ENCODE measurements at regions of chr4 and their contacts with region 1.

Region 1: GRCh38 chr4:113901994-113902787 is 77.3 kb downstream of the ARSJ start:
- DNase-seq: peak; percentile 81 to 87 (median 85)
- H3K4me3 ChIP-seq: peak overlapping the region; percentile 19 to 33
- H3K4me3 Mint-ChIP-seq: peak overlapping the region; percentile 67 to 89 (median 78)
- H3K27ac ChIP-seq: peak overlapping the region; percentile 45
- H3K27ac Mint-ChIP-seq: peak overlapping the region; percentile 69 to 98 (median 89)
- H3K4me1 ChIP-seq: peaks cover 94% of the 10 kb centered on the region
- H3K4me1 Mint-ChIP-seq: peaks cover 49 to 77% (median 66%) of the 10 kb centered on the region in 4 donors
- H3K27me3 ChIP-seq: no peaks in the 10 kb centered on the region
- H3K27me3 Mint-ChIP-seq: no peaks in the 10 kb centered on the region

Region 2: GRCh38 chr4:113825272-113825671 is 76.9 kb before region 1 on chr4:
- CTCF ChIA-PET with region 1: no interaction called
- POLR2A ChIA-PET with region 1: interaction called, 3 read pairs
- intact Hi-C with region 1: loop called (anchors 5 kb)
- DNase-seq: peak in 4 of 5 donors; percentile 32 to 36 (median 34)
- H3K4me3 ChIP-seq: no peak overlapping the region
- H3K4me3 Mint-ChIP-seq: peak overlapping the region in 6 of 8 donors; percentile 0 to 74 (median 55)
- H3K27ac ChIP-seq: no peak overlapping the region
- H3K27ac Mint-ChIP-seq: peak overlapping the region in 4 of 7 donors; percentile 1 to 28 (median 20)
- H3K4me1 ChIP-seq: peaks cover 26% of the 10 kb centered on the region
- H3K4me1 Mint-ChIP-seq: peaks cover 28 to 43% (median 36%) of the 10 kb centered on the region in 4 donors
- H3K27me3 ChIP-seq: no peaks in the 10 kb centered on the region
- H3K27me3 Mint-ChIP-seq: no peaks in the 10 kb centered on the region

Region 3: DNA sequence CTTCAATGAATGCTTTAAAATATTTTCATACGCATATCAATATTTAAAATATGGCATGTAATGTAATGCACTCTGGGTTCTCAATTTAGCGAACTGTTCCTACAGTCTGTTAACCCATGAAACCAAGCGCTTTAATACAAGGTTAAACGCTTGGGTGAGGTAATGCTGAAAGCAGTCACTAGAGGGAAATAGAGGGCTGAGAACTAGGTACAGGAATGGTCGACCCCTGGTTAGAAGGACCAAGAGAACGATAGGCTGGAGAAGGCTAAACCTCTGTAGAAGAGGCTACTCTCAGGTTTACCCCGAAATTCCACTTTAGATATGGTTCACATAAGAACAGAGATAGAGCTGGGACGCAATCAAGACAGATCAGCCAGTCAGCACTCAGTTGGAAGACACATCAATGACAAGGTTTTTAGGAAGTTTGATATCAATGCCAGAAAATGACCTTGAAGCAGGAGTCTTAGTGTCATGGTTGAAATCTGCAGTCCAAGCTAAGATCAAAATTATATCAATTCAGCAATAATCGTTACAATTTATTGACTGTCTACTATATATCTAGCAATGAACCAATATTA is 50.4 kb after region 1 on chr4:
- CTCF ChIA-PET with region 1: interaction called, 3 read pairs
- POLR2A ChIA-PET with region 1: no interaction called
- intact Hi-C with region 1: loop called (anchors 5 kb)
- DNase-seq: peak in 4 of 5 donors; percentile 5 to 30 (median 15)
- H3K4me3 ChIP-seq: no peak overlapping the region
- H3K4me3 Mint-ChIP-seq: peak overlapping the region in 1 of 8 donors; percentile 10
- H3K27ac ChIP-seq: no peak overlapping the region
- H3K27ac Mint-ChIP-seq: no peak overlapping the region
- H3K4me1 ChIP-seq: peaks cover 5% of the 10 kb centered on the region
- H3K4me1 Mint-ChIP-seq: peaks cover 0 to 6% (median 5%) of the 10 kb centered on the region in 4 donors
- H3K27me3 ChIP-seq: no peaks in the 10 kb centered on the region
- H3K27me3 Mint-ChIP-seq: peaks cover 2 to 7% of the 10 kb centered on the region in 2 donors

Region 4: GRCh38 chr4:114072781-114073180 is 170.6 kb after region 1 on chr4:
- CTCF ChIA-PET with region 1: no interaction called
- POLR2A ChIA-PET with region 1: no interaction called
- intact Hi-C with region 1: loop called (anchors 1 kb)
- DNase-seq: no peak
- H3K4me3 ChIP-seq: no peak overlapping the region
- H3K4me3 Mint-ChIP-seq: no peak overlapping the region
- H3K27ac ChIP-seq: no peak overlapping the region
- H3K27ac Mint-ChIP-seq: no peak overlapping the region
- H3K4me1 ChIP-seq: no peaks in the 10 kb centered on the region
- H3K4me1 Mint-ChIP-seq: peaks cover 0 to 5% (median 3%) of the 10 kb centered on the region in 4 donors
- H3K27me3 ChIP-seq: no peaks in the 10 kb centered on the region
- H3K27me3 Mint-ChIP-seq: peaks cover 0 to 1% of the 10 kb centered on the region in 2 donors

Measured in CD4-positive, alpha-beta memory T cell (primary cell).